ENCODE measurements at regions of chr1 and their contacts with region 1.

Region 1: DNA sequence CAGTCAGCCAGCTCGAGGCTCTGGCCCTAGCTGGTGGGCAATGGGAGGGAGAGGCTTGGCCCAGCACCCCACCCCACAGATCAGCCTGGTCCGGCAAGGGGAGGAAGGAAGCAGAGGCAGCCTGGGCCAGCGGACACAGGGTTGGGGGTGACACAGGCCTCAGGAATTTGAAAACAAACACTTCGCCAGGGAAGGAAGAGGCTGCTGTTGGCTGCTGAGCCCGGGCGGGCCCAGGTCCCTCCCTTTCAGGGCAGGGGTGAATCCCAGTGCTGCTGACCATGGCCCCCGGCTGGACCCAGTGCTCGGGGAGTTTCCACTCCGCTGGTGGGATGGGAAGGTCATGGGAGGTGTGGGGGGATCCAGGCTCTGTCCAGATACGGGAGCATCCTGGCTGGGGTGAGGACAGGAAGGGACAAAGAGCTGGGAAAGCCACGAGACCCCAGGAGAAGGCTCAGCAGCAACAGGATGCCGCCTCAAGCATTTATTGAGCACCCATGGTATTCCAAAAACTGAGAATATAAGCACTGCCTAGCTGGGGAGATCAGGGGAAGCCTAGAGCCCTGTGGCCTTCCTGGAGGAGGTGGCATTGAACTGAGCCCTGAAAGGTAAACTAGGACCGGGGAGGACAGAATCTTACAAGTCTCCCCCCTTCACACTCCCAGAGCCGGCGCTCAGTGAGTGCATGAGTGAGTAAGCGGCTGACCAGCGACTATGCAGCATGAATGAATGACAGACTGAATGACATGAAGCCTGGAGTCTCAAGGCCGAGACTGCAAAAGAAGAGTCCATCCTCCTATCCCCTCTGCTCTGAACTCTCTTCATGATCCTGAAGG is 26.2 kb upstream of the EPHA2 start:
- DNase-seq: peak; percentile 87
- ATAC-seq: peak; percentile 89
- H3K4me3 ChIP-seq: peak overlapping the region; percentile 18 to 64 (median 30); a peak in 4 of 6 replicates
- H3K27ac ChIP-seq: peak overlapping the region; percentile 76
- H3K4me1 ChIP-seq: peaks cover 90% of the 10 kb centered on the region
- H3K27me3 ChIP-seq: no peaks in the 10 kb centered on the region
- CTCF ChIP-seq: 0 out of 2 replicates have a peak, but pooled peaks have one; percentile 10
- EP300 ChIP-seq: peak; percentile 15 to 76; a peak in 3 of 4 replicates
- POLR2A ChIP-seq: peak; percentile 46 to 47; a peak in 2 of 4 replicates
- RAD21 ChIP-seq: no peak

Region 2: DNA sequence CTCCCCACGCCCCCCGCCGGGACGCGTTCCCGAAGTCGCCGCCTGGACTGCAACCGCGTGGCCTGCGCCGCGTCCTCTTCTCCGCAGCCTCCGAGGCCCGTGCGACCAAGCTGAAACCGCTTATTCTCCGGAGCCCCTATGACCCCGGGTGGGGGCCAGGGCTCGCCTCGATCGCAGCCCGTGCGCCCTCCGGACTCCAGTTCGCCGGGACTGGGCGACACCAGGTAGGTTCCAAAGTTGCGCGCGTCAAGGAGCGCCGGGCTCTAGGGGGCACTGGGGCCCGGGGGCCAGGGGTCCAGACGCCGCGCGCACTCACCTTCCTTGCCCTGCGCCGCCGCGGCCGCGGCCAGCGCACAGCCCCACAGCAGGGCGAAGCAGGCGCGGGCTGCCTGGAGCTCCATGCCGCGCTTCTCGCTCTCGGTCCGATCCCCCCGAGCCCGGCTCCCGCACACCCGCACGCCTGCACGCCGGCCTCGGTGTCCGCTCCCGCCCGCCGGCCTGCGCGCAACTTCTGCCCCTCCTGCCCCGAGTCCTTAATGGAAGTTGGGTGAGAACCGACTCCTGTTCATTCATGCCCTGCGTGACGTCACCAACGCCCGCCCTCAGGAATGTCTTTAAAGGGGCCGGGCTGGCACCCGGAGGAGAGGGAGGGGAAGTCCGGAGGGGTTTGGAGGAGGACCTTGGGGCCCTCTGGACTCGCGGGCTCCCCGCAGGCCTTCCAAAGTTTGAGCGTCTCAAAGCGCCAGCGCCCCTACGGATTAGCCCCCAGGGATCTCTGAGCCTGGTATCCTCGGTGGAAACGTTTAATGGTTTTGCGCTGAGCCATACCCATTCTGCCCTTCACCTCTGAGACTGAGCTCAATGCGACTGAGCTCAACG is 26.3 kb before region 1 on chr1 and contains the start of gene EPHA2:
- CTCF ChIA-PET with region 1: no interaction called
- POLR2A ChIA-PET with region 1: interaction called, 51 read pairs
- in situ Hi-C with region 1: no loop called
- intact Hi-C with region 1: no loop called
- DNase-seq: peak; percentile 93
- ATAC-seq: peak; percentile 65
- H3K4me3 ChIP-seq: peak within 1 kb of the TSS; percentile 92 to 100 (median 95)
- H3K27ac ChIP-seq: peak within 1 kb of the TSS; percentile 86
- H3K4me1 ChIP-seq: peaks cover 52% of the 10 kb centered on the region
- H3K27me3 ChIP-seq: no peaks in the 10 kb centered on the region; a peak in 1 of 5 replicates
- CTCF ChIP-seq: no peak
- EP300 ChIP-seq: peak in 1 of 2 experiments; percentile 38; a peak in 1 of 4 replicates
- POLR2A ChIP-seq: peak; percentile 92 to 98
- RAD21 ChIP-seq: no peak
- total RNA-seq, gene EPHA2: 15.5 and 33.6 TPM in 2 replicates

Region 3: GRCh38 chr1:16164213-16165072 is 17.7 kb before region 1 on chr1:
- CTCF ChIA-PET with region 1: no interaction called
- POLR2A ChIA-PET with region 1: interaction called, 23 read pairs
- in situ Hi-C with region 1: no loop called
- intact Hi-C with region 1: loop called (anchors 2 kb)
- DNase-seq: peak; percentile 96
- ATAC-seq: peak; percentile 83
- H3K4me3 ChIP-seq: peak overlapping the region in 2 of 3 experiments; percentile 8 to 47; a peak in 3 of 6 replicates
- H3K27ac ChIP-seq: peak overlapping the region; percentile 38
- H3K4me1 ChIP-seq: peaks cover 53% of the 10 kb centered on the region
- H3K27me3 ChIP-seq: no peaks in the 10 kb centered on the region; a peak in 1 of 5 replicates
- CTCF ChIP-seq: no peak
- EP300 ChIP-seq: peak in 1 of 2 experiments; percentile 60; a peak in 2 of 4 replicates
- POLR2A ChIP-seq: no peak
- RAD21 ChIP-seq: no peak

Region 4: DNA sequence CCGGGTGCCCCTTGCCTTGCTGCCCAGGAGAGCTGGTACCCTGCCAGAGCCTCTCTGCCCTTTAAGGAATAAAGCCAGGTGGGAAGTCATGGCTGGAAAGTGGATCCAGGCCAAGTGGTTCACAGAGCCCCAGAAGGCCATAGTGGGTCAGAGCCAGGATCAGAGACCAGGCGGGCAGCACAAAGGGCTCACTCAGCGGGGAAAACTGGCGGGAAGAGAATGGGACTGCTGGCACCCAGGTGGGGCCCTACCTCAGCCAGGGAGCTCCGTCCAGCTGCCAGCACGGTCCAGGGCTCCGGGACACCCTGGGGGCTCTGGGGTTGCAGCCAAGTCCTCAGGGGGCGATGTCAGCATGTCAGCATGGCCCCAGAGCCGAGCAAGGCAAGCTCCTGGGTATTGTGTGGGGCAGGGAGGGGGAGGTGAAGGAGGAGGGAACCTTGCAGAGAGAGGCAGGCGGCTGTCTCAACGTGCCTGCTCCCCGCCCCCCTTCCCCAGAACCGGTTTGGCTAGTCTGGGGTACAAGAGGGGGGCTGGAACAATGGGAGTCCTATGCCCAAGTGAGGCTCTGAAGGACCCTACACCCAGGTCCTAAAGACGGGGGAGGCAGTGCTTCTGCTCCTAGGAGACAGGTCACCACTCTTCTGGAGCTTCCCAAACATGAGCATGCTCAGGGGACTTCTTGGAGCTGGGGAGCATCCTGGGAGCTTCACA is 30.3 kb after region 1 on chr1 and contains the start of gene ARHGEF19:
- CTCF ChIA-PET with region 1: no interaction called
- POLR2A ChIA-PET with region 1: no interaction called
- in situ Hi-C with region 1: no loop called
- intact Hi-C with region 1: no loop called
- DNase-seq: no peak
- ATAC-seq: peak; percentile 5; the same call in 1 of the 3 replicates
- H3K4me3 ChIP-seq: peak within 1 kb of the TSS in 1 of 3 experiments; percentile 33; a peak in 1 of 6 replicates
- H3K27ac ChIP-seq: no peak within 1 kb of the TSS
- H3K4me1 ChIP-seq: peaks cover 50% of the 10 kb centered on the region
- H3K27me3 ChIP-seq: peaks cover 9 to 44% of the 10 kb centered on the region in 2 experiments; a peak in 3 of 5 replicates
- CTCF ChIP-seq: no peak
- EP300 ChIP-seq: no peak
- POLR2A ChIP-seq: no peak
- RAD21 ChIP-seq: no peak
- total RNA-seq, gene ARHGEF19: 1.8 and 2.0 TPM in 2 replicates

Region 5: GRCh38 chr1:16440470-16441281 is 258.6 kb after region 1 on chr1 and contains the start of gene NECAP2:
- CTCF ChIA-PET with region 1: no interaction called
- POLR2A ChIA-PET with region 1: no interaction called
- in situ Hi-C with region 1: no loop called
- intact Hi-C with region 1: no loop called
- DNase-seq: peak; percentile 84
- ATAC-seq: peak; percentile 97
- H3K4me3 ChIP-seq: peak within 1 kb of the TSS; percentile 83 to 97 (median 95)
- H3K27ac ChIP-seq: peak within 1 kb of the TSS; percentile 53
- H3K4me1 ChIP-seq: peaks cover 27% of the 10 kb centered on the region
- H3K27me3 ChIP-seq: no peaks in the 10 kb centered on the region; a peak in 1 of 5 replicates
- CTCF ChIP-seq: peak; percentile 99
- EP300 ChIP-seq: peak in 1 of 2 experiments; percentile 28; a peak in 2 of 4 replicates
- POLR2A ChIP-seq: peak; percentile 95 to 99
- RAD21 ChIP-seq: peak; percentile 71
- total RNA-seq, gene NECAP2: 52.3 and 62.6 TPM in 2 replicates